Activated B cell treated with CpG ODN at 0.5 μM for 24 hours (primary cell): ENCODE measurements at regions of chr15 and their contacts with region 1.

Region 1: GRCh38 chr15:49620658-49621368 is at the starts of genes DTWD1 and FAM227B:
- DNase-seq: peak; percentile 90
- ATAC-seq: peak; percentile 96
- H3K4me3 Mint-ChIP-seq: peak within 1 kb of the TSS; percentile 96
- H3K27ac Mint-ChIP-seq: peak within 1 kb of the TSS; percentile 96
- H3K4me1 Mint-ChIP-seq: peaks cover 31% of the 10 kb centered on the region
- H3K27me3 Mint-ChIP-seq: no peaks in the 10 kb centered on the region
- CTCF ChIP-seq: no peak
- total RNA-seq, gene DTWD1: 20.5 and 21.4 TPM in 2 replicates
- total RNA-seq, gene FAM227B: 4.3 and 4.5 TPM in 2 replicates

Region 2: DNA sequence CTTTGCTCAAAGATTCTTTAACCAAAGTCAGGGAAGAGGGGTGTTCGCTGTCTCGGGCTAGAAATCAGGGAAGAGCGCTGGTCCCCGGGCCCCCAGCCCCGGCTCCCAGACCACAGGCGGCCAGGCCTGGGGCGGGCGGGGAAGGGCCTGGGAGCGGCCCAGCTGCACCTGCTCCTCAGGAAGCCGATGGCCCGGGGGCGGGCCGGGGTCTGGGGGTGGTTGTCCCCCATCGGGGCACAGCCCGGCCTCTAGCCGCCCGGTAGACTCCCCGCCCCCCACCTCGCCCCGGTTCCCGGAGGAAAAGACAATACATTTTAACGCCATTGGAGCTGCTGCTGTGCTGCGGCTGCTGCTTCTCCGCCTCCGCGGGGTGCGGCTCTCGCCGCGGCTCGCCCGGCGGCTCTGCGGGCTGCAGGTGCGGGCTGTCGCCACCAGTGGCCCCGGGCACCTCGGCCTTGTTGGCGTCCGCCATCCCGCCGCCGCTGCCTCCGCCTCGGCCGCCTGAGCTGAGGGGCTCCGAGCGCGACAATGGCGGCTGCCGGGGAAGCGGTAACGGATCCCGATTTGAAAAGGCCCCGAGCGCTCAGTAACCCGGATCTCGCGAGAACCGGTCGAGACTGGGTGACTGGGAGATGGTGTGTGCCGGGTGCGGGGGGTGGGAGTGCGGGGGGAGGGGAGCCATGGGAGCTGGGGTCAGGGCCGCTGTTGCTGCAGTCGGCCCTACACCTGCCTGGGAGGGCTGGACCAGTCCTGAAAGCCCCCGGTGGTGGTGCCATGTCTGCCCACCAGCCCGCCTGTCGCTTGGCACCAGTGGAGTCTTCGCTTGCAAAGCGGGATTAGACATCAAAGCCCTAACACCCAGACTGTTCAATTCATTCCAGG is 1442.8 kb before region 1 on chr15 and contains the start of gene MYEF2:
- CTCF ChIA-PET with region 1: no interaction called
- POLR2A ChIA-PET with region 1: no interaction called
- intact Hi-C with region 1: loop called (anchors 10 kb)
- DNase-seq: peak; percentile 55
- ATAC-seq: peak; percentile 84
- H3K4me3 Mint-ChIP-seq: peak within 1 kb of the TSS; percentile 94
- H3K27ac Mint-ChIP-seq: peak within 1 kb of the TSS; percentile 90
- H3K4me1 Mint-ChIP-seq: peaks cover 18% of the 10 kb centered on the region
- H3K27me3 Mint-ChIP-seq: peaks cover 13% of the 10 kb centered on the region
- CTCF ChIP-seq: no peak
- total RNA-seq, gene MYEF2: 19.7 and 23.1 TPM in 2 replicates

Region 3: DNA sequence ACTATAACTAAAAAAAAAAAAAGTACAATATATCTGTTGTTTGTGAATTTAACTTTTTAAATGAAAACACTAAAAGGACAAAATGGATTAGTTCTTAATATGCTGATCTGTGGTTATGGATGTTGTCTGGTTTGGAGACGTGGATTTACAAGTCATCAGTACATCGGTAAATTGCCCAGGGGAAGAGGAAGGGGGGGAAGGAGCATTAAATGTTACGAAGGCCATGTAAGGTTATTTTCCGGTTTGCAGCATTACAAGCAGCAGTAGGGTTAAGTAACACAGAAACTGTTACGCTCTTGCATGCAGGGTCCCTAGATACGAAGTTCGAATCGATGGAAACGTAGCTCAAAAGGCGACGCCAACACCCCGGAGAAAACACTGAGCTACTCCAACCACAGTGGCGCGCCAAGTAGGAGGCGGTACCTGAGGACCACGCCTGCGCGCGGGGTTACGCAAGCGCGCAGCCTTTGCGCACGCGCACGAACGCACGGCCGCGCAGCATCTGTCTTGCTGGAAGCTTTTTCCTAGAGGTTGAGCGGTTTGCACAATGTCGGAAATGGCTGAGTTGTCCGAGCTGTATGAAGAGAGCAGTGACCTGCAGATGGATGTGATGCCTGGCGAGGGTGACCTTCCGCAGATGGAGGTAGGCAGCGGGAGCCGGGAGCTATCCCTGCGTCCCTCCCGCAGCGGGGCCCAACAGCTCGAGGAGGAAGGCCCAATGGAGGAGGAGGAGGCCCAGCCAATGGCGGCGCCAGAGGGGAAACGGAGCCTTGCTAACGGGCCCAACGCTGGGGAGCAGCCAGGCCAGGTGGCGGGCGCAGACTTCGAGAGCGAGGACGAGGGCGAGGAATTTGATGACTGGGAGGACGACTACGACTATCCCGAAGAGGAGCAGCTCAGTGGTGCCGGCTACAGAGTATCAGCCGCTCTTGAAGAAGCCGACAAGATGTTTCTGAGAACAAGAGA is 742.9 kb before region 1 on chr15 and contains the start of gene EID1:
- CTCF ChIA-PET with region 1: no interaction called
- POLR2A ChIA-PET with region 1: interaction called, 8 read pairs
- intact Hi-C with region 1: loop called (anchors 1 kb)
- DNase-seq: peak; percentile 90
- ATAC-seq: peak; percentile 95
- H3K4me3 Mint-ChIP-seq: peak within 1 kb of the TSS; percentile 99
- H3K27ac Mint-ChIP-seq: peak within 1 kb of the TSS; percentile 97
- H3K4me1 Mint-ChIP-seq: peaks cover 27% of the 10 kb centered on the region
- H3K27me3 Mint-ChIP-seq: peaks cover 3% of the 10 kb centered on the region
- CTCF ChIP-seq: no peak
- total RNA-seq, gene EID1: 51.3 and 54.4 TPM in 2 replicates

Region 4: GRCh38 chr15:50424066-50424890 is 803.5 kb after region 1 on chr15 and contains the start of gene USP8:
- CTCF ChIA-PET with region 1: no interaction called
- POLR2A ChIA-PET with region 1: no interaction called
- intact Hi-C with region 1: loop called (anchors 1 kb)
- DNase-seq: peak; percentile 90
- ATAC-seq: peak; percentile 98
- H3K4me3 Mint-ChIP-seq: peak within 1 kb of the TSS; percentile 90
- H3K27ac Mint-ChIP-seq: peak within 1 kb of the TSS; percentile 89
- H3K4me1 Mint-ChIP-seq: peaks cover 44% of the 10 kb centered on the region
- H3K27me3 Mint-ChIP-seq: no peaks in the 10 kb centered on the region
- CTCF ChIP-seq: no peak
- total RNA-seq, gene USP8: 71.3 and 78.3 TPM in 2 replicates

Region 5: DNA sequence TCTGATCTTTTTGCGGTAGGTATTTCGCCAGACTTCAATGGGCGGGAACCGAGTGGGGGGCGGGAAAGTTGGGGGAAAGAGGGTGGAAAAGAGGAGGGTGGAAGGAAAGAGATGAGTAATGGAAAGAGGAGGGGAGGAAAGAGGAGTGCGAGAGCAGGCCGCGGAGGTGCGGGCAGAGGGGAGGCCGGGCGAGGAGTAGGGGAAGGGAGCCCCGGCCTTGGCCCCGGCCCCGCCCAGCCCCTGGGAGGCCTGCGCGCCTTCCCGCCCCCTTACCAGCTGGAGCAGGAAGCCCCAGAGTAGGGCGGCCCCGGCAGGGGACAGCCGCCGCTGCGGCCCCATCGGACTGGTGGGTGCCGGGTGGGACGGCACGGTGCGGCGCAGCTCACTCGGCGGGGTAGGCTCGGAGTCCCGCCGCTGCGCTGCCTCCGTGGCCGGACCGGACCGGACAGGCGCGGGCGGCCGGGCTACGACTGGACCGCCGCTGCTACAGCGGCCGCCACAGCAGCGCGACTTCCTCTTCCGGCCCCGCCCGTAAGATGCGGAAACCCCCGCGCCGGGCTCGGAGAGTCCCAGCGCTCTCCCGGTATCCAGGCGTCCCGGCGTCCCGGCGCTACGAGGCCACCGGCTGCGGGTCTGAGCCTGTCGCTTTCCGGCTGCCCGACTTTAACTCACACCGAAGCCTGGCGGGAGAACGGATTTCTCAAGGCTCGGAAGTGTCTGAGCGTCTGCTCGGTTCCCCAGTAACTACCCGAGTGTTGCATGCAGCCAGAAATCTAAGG is 1144.6 kb after region 1 on chr15 and contains the start of gene SPPL2A:
- CTCF ChIA-PET with region 1: no interaction called
- POLR2A ChIA-PET with region 1: no interaction called
- intact Hi-C with region 1: loop called (anchors 10 kb)
- DNase-seq: peak; percentile 87
- ATAC-seq: peak; percentile 94
- H3K4me3 Mint-ChIP-seq: peak within 1 kb of the TSS; percentile 97
- H3K27ac Mint-ChIP-seq: peak within 1 kb of the TSS; percentile 95
- H3K4me1 Mint-ChIP-seq: peaks cover 48% of the 10 kb centered on the region
- H3K27me3 Mint-ChIP-seq: no peaks in the 10 kb centered on the region
- CTCF ChIP-seq: no peak
- total RNA-seq, gene SPPL2A: 79.1 and 85.3 TPM in 2 replicates